ENCODE measurements at regions of chr2 and their contacts with region 1.

Region 1: GRCh38 chr2:217804786-217805667 is 197.8 kb downstream of the TNS1 start:
- DNase-seq: no peak
- ATAC-seq: peak in 6 of 8 donors; percentile 25 to 66 (median 34)
- H3K4me3 ChIP-seq: no peak overlapping the region
- H3K27ac ChIP-seq: peak overlapping the region in 9 of 10 donors; percentile 5 to 68 (median 51)
- H3K4me1 ChIP-seq: peaks cover 9 to 89% (median 50%) of the 10 kb centered on the region in 9 donors
- H3K27me3 ChIP-seq: no peaks in the 10 kb centered on the region
- CTCF ChIP-seq: no peak

Region 2: DNA sequence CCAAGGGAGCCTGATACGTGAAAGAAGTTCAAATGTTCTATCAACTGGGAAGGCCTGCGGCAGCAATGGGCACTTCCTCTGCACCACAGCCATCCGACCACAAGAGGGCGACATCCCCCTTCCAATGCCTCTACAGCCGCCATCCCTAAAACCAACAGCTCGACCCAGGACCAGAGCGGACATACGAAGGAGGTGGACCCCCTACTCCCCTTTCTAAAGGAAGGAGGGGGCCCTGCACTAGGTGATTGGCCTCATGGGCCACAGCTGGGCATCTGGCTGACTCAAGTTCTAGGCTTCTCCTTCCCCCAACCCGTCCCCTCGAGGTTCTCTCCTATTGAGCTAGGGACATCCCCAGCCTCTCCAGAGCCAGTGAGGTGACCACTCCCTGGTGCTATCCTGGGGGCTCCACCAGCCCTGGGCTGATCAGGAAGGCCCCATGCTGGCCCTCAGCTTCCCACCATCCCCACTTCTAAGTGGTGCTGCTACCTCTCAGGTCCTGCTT is 19.4 kb before region 1 on chr2:
- intact Hi-C with region 1: no loop called
- DNase-seq: peak; percentile 79 to 82
- ATAC-seq: peak; percentile 66 to 80 (median 72)
- H3K4me3 ChIP-seq: no peak overlapping the region
- H3K27ac ChIP-seq: no peak overlapping the region
- H3K4me1 ChIP-seq: peaks cover 0 to 28% (median 22%) of the 10 kb centered on the region in 9 donors
- H3K27me3 ChIP-seq: no peaks in the 10 kb centered on the region
- CTCF ChIP-seq: peak; percentile 88 to 98 (median 97)

Region 3: DNA sequence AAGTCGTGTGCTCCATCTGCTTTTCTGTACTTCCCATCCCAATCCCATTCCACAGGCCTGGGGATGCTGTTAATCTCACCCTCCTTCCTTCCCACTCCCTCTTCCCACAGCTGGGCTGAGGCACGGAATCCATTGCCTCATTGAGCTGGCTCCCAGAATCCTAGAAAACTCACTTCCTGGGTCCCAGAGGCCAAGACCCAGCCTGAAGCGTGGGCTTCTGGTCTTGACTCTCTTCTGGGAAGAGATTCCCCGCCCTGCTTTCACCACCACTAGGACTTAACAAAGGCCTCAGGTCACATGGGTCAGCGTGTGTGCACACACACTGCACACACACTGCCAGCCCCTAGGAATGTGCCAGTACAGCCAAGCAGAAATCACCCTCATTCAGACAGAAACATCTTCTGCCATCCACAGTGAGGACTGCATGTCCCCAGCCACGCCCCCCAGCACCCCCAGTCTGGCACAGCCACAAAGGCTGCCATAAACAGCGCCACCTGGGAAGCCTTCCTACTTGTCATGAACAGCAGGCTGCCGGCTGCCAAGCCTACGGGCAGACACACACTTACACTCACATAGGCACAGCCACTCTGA is 32.0 kb after region 1 on chr2:
- intact Hi-C with region 1: loop called in 1 of 10 experiments (anchors 5 kb)
- DNase-seq: peak; percentile 81 to 84
- ATAC-seq: peak; percentile 48 to 73 (median 62)
- H3K4me3 ChIP-seq: no peak overlapping the region
- H3K27ac ChIP-seq: peak overlapping the region; percentile 71 to 97 (median 90)
- H3K4me1 ChIP-seq: peaks cover 56 to 100% (median 97%) of the 10 kb centered on the region in 9 donors
- H3K27me3 ChIP-seq: no peaks in the 10 kb centered on the region
- CTCF ChIP-seq: peak in 7 of 9 donors; percentile 15 to 50 (median 36)

Region 4: GRCh38 chr2:217858519-217859491 is 53.8 kb after region 1 on chr2:
- intact Hi-C with region 1: loop called in 2 of 10 experiments (anchors 10 kb)
- DNase-seq: peak; percentile 81 to 93
- ATAC-seq: peak; percentile 77 to 88 (median 83)
- H3K4me3 ChIP-seq: peak overlapping the region; percentile 14 to 68 (median 52)
- H3K27ac ChIP-seq: peak overlapping the region; percentile 82 to 99 (median 92)
- H3K4me1 ChIP-seq: peaks cover 21 to 96% (median 83%) of the 10 kb centered on the region in 9 donors
- H3K27me3 ChIP-seq: no peaks in the 10 kb centered on the region
- CTCF ChIP-seq: no peak

Region 5: GRCh38 chr2:217864963-217865772 is 60.1 kb after region 1 on chr2:
- intact Hi-C with region 1: loop called in 2 of 10 experiments (anchors 5 to 10 kb)
- DNase-seq: no peak
- ATAC-seq: no peak
- H3K4me3 ChIP-seq: no peak overlapping the region
- H3K27ac ChIP-seq: peak overlapping the region in 1 of 10 donors; percentile 77
- H3K4me1 ChIP-seq: peaks cover 3 to 88% (median 66%) of the 10 kb centered on the region in 9 donors
- H3K27me3 ChIP-seq: no peaks in the 10 kb centered on the region
- CTCF ChIP-seq: no peak

Region 6: DNA sequence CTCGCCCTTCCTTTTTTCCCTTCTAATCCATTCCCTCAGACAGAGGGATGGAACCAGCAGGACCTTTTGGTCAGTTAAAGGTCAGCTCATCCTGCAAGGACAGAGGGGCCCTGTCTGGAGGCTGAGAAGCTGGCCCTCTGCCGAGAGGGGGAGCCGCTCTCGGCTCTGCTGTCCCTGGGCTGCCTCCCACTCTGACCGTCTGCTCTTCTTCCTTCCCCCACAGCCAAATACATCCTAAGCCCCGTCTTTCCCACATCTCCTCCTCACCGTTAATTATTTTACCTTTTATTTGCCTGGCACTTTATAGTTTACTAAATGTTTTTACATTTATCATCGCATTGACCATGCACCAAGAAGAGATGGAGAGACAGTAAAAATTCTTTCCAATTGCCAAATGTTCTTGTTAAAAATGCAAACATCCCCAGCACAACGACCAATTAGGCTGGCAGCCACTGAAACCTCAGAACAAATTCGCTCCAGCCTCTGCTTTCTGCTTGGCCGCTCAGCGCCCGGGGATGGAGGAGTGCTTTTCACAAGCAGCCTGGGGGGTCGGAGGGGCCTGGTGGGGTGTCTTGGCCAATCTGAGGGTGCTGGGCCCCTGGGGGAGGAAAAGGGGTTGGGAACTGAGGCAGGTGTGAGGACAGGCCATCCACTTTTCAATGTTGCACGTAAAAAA is 74.0 kb after region 1 on chr2:
- intact Hi-C with region 1: loop called in 1 of 10 experiments (anchors 5 kb)
- DNase-seq: no peak
- ATAC-seq: peak in 3 of 8 donors; percentile 17 to 28 (median 22)
- H3K4me3 ChIP-seq: no peak overlapping the region
- H3K27ac ChIP-seq: peak overlapping the region in 7 of 10 donors; percentile 13 to 73 (median 58)
- H3K4me1 ChIP-seq: peaks cover 0 to 77% (median 60%) of the 10 kb centered on the region in 9 donors
- H3K27me3 ChIP-seq: no peaks in the 10 kb centered on the region
- CTCF ChIP-seq: no peak

Region 7: DNA sequence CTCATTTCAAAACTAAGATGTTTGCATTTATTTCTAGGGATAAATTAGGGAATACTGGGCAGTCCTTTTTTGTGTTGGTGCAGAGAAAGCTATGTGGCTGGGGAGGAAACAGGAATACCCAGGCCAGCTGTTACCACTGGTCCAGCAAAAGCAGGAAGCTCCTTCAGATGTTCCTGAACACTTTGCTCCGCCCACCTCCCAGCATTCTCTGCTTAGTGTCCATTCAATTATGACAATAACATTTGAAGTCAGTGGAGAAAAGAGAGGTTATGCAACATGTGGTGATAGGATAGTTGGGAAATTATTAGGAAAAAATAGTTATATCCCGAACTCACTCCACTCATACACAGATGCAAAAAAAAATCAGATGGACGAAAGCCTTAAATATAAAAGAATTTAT is 389.9 kb after region 1 on chr2:
- intact Hi-C with region 1: no loop called
- DNase-seq: no peak
- ATAC-seq: no peak
- H3K4me3 ChIP-seq: no peak overlapping the region
- H3K27ac ChIP-seq: no peak overlapping the region
- H3K4me1 ChIP-seq: peaks cover 0 to 13% (median 0%) of the 10 kb centered on the region in 9 donors
- H3K27me3 ChIP-seq: no peaks in the 10 kb centered on the region
- CTCF ChIP-seq: no peak

Measured in heart right ventricle (tissue), 16 donors.